Aorta (tissue), 5 donors: ENCODE measurements at regions of chr11 and their contacts with region 1.

Region 1: GRCh38 chr11:121451986-121452608 is at the start of gene SORL1:
- DNase-seq: peak; percentile 86 to 95
- ATAC-seq: peak; percentile 89
- H3K4me3 ChIP-seq: peak within 1 kb of the TSS; percentile 81 to 92
- H3K27ac ChIP-seq: no peak within 1 kb of the TSS
- H3K4me1 ChIP-seq: no peaks in the 10 kb centered on the region
- H3K27me3 ChIP-seq: no peaks in the 10 kb centered on the region
- total RNA-seq, gene SORL1: 34.0 to 37.2 TPM

Region 2: DNA sequence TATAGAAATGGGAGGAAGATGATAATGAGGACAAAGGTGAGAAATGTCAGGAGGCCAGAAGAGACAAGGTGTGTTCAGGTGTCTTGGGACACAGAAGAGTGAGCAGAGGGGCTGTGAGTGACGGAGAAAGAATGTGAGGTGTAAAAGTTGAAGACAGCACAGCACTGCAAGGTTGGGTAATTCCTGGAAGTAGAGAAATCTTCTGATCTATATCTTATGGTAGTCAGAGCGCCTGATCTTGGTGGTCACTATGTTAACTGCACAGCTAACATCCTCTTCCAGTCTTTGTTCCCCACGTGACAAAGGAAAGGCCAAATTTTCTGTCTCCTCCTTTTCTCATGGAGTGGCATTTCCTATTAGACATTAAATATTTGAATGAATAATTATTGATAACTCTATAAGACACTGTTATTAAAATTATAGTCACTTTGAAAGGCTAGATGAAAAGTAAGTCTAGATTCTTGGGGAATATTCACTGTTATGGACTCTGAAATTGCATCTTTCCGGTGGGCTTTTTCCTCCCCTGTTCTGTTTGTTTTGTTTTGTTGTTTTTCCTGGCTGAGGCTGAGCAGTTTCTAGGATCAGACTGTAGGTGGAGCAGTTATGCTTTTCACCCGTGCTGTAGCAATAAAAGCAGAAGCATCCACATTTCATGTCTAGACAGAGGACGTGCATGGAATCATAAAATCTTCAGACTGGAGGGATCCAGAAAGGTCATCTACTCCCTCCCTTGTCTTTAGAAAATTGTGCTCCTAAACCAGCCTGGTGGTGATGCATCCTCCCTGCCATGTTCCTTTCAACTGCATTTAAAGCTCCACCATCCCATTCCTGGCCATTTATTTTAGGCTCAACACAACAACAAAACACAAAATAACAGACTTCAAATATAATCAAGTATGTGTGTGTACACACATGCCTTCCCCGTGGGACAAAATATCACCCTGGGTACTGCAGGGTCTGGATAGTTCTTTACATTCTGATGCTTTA is 133.0 kb before region 1 on chr11:
- intact Hi-C with region 1: loop called in 1 of 2 experiments (anchors 10 kb)
- DNase-seq: no peak
- ATAC-seq: no peak
- H3K4me3 ChIP-seq: no peak overlapping the region
- H3K27ac ChIP-seq: no peak overlapping the region
- H3K4me1 ChIP-seq: no peaks in the 10 kb centered on the region
- H3K27me3 ChIP-seq: no peaks in the 10 kb centered on the region

Region 3: DNA sequence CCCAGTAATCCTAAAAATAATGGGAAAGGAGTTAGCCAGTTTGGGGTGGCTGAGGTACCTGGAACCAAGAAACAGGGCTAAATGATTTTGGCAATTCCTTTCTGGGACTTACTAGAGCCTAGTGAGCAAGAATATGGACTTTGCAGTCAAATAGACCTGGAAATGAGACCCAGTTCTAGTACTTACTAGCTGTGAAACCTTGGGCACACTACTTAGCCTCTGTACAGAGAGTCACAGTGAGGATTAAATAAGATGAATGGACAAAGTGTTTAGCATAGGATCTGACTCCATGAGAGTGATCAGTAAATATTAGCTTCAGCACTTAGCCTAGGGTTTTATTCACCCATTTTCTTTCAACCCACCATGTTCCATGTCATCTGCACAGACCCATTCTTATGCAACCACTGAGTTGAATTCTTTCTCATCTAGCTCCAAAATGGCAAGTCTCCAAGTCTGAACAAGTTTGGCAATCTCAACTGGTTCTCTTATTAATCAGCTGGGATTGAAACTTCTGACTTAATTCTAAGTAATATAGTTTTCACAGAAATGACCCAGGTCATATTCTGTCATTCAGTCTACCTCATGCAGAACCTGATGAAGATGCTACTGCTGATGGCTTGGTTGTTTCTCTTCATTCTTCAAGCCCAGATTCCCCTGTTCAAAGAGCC is 14.9 kb before region 1 on chr11:
- intact Hi-C with region 1: no loop called
- DNase-seq: no peak
- ATAC-seq: peak; percentile 26
- H3K4me3 ChIP-seq: no peak overlapping the region
- H3K27ac ChIP-seq: no peak overlapping the region
- H3K4me1 ChIP-seq: peaks cover 0 to 2% of the 10 kb centered on the region in 2 donors
- H3K27me3 ChIP-seq: no peaks in the 10 kb centered on the region

Region 4: GRCh38 chr11:121520243-121521144 is 68.4 kb after region 1 on chr11:
- intact Hi-C with region 1: loop called in 1 of 2 experiments (anchors 5 kb)
- DNase-seq: no peak
- ATAC-seq: peak; percentile 72
- H3K4me3 ChIP-seq: no peak overlapping the region
- H3K27ac ChIP-seq: peak overlapping the region; percentile 49 to 79
- H3K4me1 ChIP-seq: peaks cover 0 to 2% of the 10 kb centered on the region in 2 donors
- H3K27me3 ChIP-seq: no peaks in the 10 kb centered on the region

Region 5: DNA sequence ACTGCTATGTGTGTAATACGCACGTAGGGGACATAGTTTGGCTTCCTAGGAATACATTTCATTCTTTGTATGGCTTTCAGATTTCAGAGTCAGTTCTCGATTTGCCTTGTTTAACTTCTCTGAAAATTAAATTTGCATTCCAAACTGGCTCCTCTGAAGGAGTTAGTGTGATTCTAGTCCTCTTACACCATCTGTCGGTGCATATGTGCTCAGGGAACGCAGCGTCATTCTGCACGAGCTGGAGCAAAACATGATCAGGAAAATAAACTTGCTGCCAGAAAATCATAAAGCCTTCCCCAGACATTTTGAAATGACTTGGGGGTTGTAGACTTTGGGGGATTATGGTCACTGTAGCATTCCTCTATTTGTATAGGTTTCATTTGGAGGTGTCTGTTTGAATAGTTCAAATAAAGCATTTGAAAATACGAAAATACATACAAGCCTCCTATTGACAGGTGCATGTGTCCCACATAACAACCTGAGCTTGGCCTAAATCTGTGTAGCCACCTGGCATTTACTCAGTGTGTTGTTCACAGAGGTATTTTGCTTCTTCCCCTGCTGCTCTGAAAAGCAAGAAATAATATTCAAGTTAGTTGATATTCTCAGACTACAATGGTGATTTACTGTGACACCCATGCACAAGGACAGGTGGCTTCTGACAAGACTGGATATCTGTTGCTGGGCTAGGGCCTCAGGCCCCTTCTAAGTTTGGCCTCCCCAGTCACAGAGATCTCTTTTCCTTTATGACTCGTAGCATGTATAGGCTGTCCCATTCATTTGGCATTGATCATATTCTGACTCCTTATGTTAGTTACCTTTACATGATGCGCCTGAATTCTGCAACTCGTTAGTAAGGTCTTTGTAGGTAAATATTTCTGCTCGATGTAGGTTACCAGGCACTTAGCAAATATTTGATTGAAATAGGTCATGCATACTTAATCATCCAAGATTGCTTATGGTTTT is 82.3 kb after region 1 on chr11:
- intact Hi-C with region 1: loop called in 1 of 2 experiments (anchors 5 kb)
- DNase-seq: no peak
- ATAC-seq: no peak
- H3K4me3 ChIP-seq: no peak overlapping the region
- H3K27ac ChIP-seq: no peak overlapping the region
- H3K4me1 ChIP-seq: no peaks in the 10 kb centered on the region
- H3K27me3 ChIP-seq: no peaks in the 10 kb centered on the region

Region 6: DNA sequence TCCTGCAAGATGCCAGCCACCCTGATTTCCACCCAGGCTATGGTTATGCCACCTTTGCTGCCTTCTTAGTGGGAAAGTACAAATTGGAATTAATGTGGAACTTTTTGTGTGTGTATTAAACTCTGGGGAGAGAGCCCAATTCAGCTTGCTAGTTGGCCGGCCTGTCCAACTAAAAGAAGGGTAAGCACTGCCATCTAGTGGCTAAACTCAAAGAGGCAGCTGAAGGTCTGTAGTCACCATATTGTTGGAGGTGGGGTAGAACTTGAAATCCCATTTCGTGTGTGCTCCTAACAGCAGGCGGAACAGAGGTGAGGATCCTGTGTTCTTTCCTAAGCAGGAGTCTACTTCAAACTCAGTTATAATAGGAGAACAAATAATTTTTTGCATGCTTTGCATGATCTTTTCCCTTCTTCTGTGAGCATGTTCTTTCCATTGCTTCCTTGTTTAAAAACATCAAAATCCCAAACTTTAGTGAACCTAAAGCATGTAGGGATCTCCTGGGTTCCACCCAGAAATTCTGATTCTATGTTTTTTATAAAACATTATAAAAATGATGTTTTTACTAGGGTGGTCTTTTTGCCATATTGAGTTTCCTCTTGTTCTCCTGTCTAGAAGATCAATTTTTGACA is 139.4 kb after region 1 on chr11:
- intact Hi-C with region 1: loop called in 1 of 2 experiments (anchors 5 kb)
- DNase-seq: peak in 1 of 2 donors; percentile 60
- ATAC-seq: peak; percentile 85
- H3K4me3 ChIP-seq: no peak overlapping the region
- H3K27ac ChIP-seq: no peak overlapping the region
- H3K4me1 ChIP-seq: no peaks in the 10 kb centered on the region
- H3K27me3 ChIP-seq: no peaks in the 10 kb centered on the region